ENCODE measurements at regions of chr3 and their contacts with region 1.

Region 1: GRCh38 chr3:120558771-120559241 is 37.3 kb upstream of the NDUFB4 start:
- DNase-seq: peak; percentile 38
- H3K4me3 ChIP-seq: peak overlapping the region; percentile 55
- CTCF ChIP-seq: peak; percentile 88

Region 2: DNA sequence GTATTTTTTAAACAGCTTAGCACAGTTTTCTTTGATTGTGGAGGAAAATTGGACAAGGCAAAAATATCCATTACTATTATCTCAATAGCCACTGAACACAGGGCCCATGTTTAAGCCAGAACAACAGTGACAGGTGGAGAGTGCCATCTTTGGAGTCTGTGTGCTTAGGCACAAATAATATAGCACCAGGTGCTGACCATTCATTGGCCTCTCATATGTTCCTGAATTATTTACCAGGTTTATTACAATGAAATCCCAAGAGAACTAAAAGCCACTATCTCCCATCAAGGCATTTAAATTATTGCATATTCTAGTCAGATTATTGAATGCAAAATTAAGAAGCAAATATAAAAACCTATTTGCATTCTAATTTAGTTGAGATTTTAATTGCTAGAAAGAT is 313.4 kb before region 1 on chr3:
- CTCF ChIA-PET with region 1: interaction called, 118 read pairs
- POLR2A ChIA-PET with region 1: interaction called, 3 read pairs
- DNase-seq: no peak
- H3K4me3 ChIP-seq: no peak overlapping the region
- CTCF ChIP-seq: no peak

Region 3: DNA sequence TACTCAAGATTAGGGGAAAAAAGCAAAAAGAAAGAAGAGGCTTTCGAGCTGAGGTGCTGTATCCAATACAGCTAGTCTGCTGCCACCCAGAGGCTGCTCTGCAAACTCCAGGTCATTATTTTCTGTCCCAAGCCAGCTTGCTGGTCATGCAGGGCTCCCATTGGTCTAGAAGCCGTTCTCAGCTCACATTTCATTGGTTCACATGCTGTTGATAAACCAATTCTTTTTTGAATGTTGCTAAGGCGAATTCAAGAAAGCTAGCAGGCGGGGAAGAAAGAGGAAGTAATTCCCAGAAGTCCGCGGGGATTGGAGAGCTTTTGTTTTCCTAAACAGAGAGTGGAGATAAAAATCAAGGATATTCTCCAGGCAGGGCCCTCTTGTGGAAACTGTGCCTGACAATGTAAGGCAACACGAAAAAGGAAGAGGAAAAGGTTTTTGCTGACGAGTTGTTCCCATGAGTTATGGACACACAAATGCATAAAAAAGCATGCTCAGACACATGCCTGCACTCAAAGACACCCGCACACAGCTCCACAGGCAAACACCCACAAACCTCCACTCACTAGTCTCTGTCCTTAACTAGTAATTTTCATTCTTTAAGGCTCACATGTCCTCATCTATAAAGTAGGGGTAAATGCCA is 141.4 kb before region 1 on chr3:
- CTCF ChIA-PET with region 1: interaction called, 244 read pairs
- POLR2A ChIA-PET with region 1: interaction called, 3 read pairs
- DNase-seq: peak; percentile 94
- H3K4me3 ChIP-seq: 0 out of 2 replicates have a peak overlapping the region, but pooled peaks have one; percentile 28
- CTCF ChIP-seq: peak; percentile 70

Region 4: GRCh38 chr3:120470870-120471269 is 87.9 kb before region 1 on chr3:
- CTCF ChIA-PET with region 1: interaction called, 10 read pairs
- POLR2A ChIA-PET with region 1: no interaction called
- DNase-seq: no peak
- H3K4me3 ChIP-seq: no peak overlapping the region
- CTCF ChIP-seq: no peak

Region 5: GRCh38 chr3:120673116-120673515 is 114.3 kb after region 1 on chr3:
- CTCF ChIA-PET with region 1: no interaction called
- POLR2A ChIA-PET with region 1: no interaction called
- DNase-seq: no peak
- H3K4me3 ChIP-seq: no peak overlapping the region
- CTCF ChIP-seq: no peak

Region 6: DNA sequence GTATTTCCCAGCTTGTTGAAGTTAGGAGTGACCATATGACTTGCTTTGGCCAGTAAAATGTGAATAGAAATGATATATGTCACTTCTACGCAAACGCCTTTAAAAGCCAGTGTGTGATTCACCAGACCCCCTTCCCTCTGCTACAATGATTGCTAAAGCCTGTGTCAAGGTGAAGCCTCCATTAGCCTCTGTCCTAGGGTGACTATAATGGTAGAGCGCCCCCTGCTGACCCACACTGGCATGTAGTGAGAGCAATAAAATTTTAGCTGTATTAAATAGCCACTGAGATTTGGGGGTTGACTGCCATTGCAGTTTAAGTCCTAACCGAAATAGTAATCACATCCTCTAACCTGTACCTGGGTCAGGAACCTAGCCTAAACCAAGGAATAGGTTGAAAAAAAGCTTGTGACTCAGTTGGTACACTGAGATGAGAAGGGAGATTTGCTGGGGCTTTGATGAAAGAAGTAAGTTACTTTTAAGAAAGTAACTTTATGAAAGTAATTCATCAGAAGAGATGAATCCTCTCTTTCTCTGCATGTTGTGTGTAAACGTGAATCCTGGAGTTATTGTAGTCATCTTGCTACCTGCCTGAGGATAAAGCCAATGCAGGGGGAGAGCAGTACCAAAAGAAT is 236.3 kb after region 1 on chr3:
- CTCF ChIA-PET with region 1: interaction called, 279 read pairs
- POLR2A ChIA-PET with region 1: interaction called, 3 read pairs
- DNase-seq: no peak
- H3K4me3 ChIP-seq: no peak overlapping the region
- CTCF ChIP-seq: peak; percentile 75

Region 7: DNA sequence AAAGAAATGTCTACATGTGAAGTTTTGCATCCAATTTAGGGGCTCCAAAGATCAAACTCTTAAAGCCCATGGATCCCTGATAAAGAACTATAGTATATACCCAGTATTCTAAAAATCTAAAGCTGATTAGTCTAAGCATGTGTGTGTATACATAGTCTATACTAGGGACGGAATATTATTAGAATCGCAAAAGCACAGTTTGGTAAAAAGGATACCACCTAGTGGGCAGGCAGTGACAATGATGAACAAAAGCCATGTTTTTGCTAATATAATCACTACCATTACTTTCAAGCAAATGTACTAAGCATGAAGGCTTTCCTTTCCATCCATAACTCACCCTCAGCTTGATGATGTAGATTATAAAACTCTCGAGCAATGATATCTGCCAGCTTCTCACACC is 970.5 kb after region 1 on chr3:
- CTCF ChIA-PET with region 1: interaction called, 21 read pairs
- POLR2A ChIA-PET with region 1: no interaction called
- DNase-seq: no peak
- H3K4me3 ChIP-seq: no peak overlapping the region
- CTCF ChIP-seq: peak; percentile 53

Measured in AG04449 (cell line).